Heart left ventricle (tissue), 16 donors: ENCODE measurements at regions of chr2 and their contacts with region 1.

Region 1: GRCh38 chr2:207833251-207833751 is 63.6 kb upstream of the FZD5 start:
- DNase-seq: no peak
- ATAC-seq: no peak
- H3K4me3 ChIP-seq: no peak overlapping the region
- H3K27ac ChIP-seq: no peak overlapping the region
- H3K4me1 ChIP-seq: peaks cover 0 to 42% (median 18%) of the 10 kb centered on the region in 12 donors
- H3K27me3 ChIP-seq: no peaks in the 10 kb centered on the region
- CTCF ChIP-seq: no peak
- POLR2A ChIP-seq: no peak

Region 2: DNA sequence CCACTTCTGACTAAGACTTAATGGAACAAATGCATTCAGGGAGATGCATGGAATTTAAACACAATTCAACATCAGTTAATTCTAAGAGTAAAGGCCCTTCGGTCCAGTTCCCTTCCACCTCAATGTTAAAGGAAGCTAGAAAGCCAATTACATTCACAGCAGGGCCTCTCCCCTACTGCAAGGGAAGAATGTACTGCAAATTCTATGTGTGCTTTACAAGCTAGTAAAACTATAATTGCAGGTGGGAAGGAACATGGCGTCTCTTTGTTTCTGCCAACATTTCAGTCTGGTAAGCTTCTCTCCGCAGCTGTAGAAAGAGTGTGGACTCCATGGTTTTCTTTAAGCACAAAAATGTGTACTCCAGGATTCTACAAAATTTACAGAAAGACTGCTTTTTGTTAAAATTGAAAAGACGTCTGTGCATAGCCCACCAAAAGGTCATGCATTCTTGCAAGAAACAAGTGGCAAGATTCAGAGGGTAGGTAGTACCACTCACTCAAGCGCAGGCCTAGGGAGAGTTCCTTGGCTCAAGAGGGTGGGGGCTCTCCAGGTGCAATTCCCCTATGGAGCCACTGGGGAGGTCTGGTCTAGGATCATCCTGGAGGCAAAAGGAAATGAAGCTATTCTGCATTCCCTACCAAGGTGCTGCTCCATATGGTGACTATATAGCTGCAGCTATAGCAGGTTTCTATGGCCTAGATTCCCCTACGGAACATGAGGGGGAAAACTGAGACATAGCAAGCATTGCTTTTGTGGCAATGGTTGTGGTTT is 63.4 kb after region 1 on chr2:
- intact Hi-C with region 1: loop called in 1 of 10 experiments (anchors 10 kb)
- DNase-seq: no peak
- ATAC-seq: no peak
- H3K4me3 ChIP-seq: no peak overlapping the region
- H3K27ac ChIP-seq: peak overlapping the region in 1 of 12 donors; percentile 50
- H3K4me1 ChIP-seq: peaks cover 0 to 21% (median 9%) of the 10 kb centered on the region in 12 donors
- H3K27me3 ChIP-seq: no peaks in the 10 kb centered on the region
- CTCF ChIP-seq: peak in 2 of 12 donors; percentile 6 to 19
- POLR2A ChIP-seq: no peak

Region 3: GRCh38 chr2:207951734-207952470 is 118.6 kb after region 1 on chr2:
- intact Hi-C with region 1: no loop called
- DNase-seq: no peak
- ATAC-seq: no peak
- H3K4me3 ChIP-seq: no peak overlapping the region
- H3K27ac ChIP-seq: no peak overlapping the region
- H3K4me1 ChIP-seq: peaks cover 0 to 35% (median 20%) of the 10 kb centered on the region in 12 donors
- H3K27me3 ChIP-seq: no peaks in the 10 kb centered on the region
- CTCF ChIP-seq: no peak
- POLR2A ChIP-seq: no peak